Activated CD4-positive, alpha-beta T cell treated with anti-CD3 and anti-CD28 coated beads, Interleukin-2, amount 10 ng/mL, durations not matched to agents 7 days and 5 days (primary cell): ENCODE measurements at regions of chr14 and their contacts with region 1.

Region 1: GRCh38 chr14:50025776-50026175 is 90.6 kb downstream of the VCPKMT start:
- DNase-seq: no peak
- H3K4me3 Mint-ChIP-seq: no peak overlapping the region
- H3K27ac Mint-ChIP-seq: no peak overlapping the region
- H3K4me1 Mint-ChIP-seq: peaks cover 21% of the 10 kb centered on the region
- H3K27me3 Mint-ChIP-seq: no peaks in the 10 kb centered on the region

Region 2: GRCh38 chr14:49905989-49906388 is 119.8 kb before region 1 on chr14:
- CTCF ChIA-PET with region 1: no interaction called
- POLR2A ChIA-PET with region 1: no interaction called
- DNase-seq: no peak
- H3K4me3 Mint-ChIP-seq: no peak overlapping the region
- H3K27ac Mint-ChIP-seq: no peak overlapping the region
- H3K4me1 Mint-ChIP-seq: peaks cover 33% of the 10 kb centered on the region
- H3K27me3 Mint-ChIP-seq: no peaks in the 10 kb centered on the region

Region 3: GRCh38 chr14:50038398-50039119 is 12.8 kb after region 1 on chr14:
- CTCF ChIA-PET with region 1: interaction called, 13 read pairs
- POLR2A ChIA-PET with region 1: no interaction called
- DNase-seq: peak; percentile 46
- H3K4me3 Mint-ChIP-seq: peak overlapping the region; percentile 48
- H3K27ac Mint-ChIP-seq: peak overlapping the region; percentile 96
- H3K4me1 Mint-ChIP-seq: peaks cover 74% of the 10 kb centered on the region
- H3K27me3 Mint-ChIP-seq: no peaks in the 10 kb centered on the region